Heart right ventricle (tissue), 16 donors: ENCODE measurements at regions of chr2 and their contacts with region 1.

Region 1: DNA sequence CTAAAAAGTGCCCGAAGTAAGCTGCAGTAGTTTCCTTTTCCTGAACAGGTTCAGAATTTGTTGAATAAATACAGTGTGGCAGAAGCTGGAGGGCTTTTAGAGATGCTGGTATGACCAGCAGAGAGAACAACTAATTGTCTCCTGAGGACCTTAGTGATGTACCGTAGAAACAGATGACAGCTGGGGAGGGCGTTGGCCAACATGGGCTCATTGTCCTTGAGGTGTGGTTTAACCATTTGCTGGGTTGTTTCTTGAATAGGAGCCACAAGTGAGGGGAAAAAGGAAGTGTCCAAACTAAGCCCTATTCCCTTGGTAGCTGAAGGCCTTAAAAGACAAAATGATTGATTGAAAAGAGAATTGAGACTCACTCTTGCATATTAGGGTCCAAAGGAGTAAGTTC is 11.7 kb upstream of the FAM228A start:
- DNase-seq: no peak
- ATAC-seq: no peak
- H3K4me3 ChIP-seq: no peak overlapping the region
- H3K27ac ChIP-seq: no peak overlapping the region
- H3K4me1 ChIP-seq: no peaks in the 10 kb centered on the region
- H3K27me3 ChIP-seq: no peaks in the 10 kb centered on the region
- CTCF ChIP-seq: no peak

Region 2: GRCh38 chr2:23824777-23825212 is 338.4 kb before region 1 on chr2:
- intact Hi-C with region 1: loop called in 1 of 10 experiments (anchors 2 kb)
- DNase-seq: peak in 1 of 2 donors; percentile 18
- ATAC-seq: peak in 4 of 8 donors; percentile 16 to 52 (median 28)
- H3K4me3 ChIP-seq: no peak overlapping the region
- H3K27ac ChIP-seq: no peak overlapping the region
- H3K4me1 ChIP-seq: peaks cover 0 to 7% (median 0%) of the 10 kb centered on the region in 9 donors
- H3K27me3 ChIP-seq: no peaks in the 10 kb centered on the region
- CTCF ChIP-seq: peak; percentile 25 to 81 (median 70)

Region 3: DNA sequence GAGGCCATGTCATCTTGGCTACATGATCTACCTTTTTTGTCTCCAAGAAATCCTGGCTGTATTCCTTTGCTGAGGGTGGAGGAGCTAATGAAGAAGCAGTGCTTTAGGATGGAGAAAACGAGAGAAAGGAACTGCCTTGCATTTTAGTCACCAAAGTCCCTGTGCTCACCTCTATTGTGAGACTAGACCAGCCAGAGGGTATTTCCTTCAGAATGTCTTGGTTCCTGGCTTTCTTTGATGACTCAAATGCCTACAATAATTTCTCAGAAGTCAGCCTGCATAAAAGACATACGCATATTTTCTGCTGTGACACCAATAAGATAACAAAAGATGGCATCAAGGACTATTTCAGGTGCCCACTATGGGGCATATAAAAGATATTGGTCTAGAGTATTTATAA is 97.8 kb before region 1 on chr2:
- intact Hi-C with region 1: no loop called
- DNase-seq: no peak
- ATAC-seq: no peak
- H3K4me3 ChIP-seq: no peak overlapping the region
- H3K27ac ChIP-seq: no peak overlapping the region
- H3K4me1 ChIP-seq: no peaks in the 10 kb centered on the region
- H3K27me3 ChIP-seq: no peaks in the 10 kb centered on the region
- CTCF ChIP-seq: no peak

Region 4: GRCh38 chr2:24456599-24457556 is 293.7 kb after region 1 on chr2:
- intact Hi-C with region 1: no loop called
- DNase-seq: peak; percentile 45 to 49
- ATAC-seq: peak; percentile 75 to 97 (median 90)
- H3K4me3 ChIP-seq: no peak overlapping the region
- H3K27ac ChIP-seq: no peak overlapping the region
- H3K4me1 ChIP-seq: peaks cover 0 to 29% (median 8%) of the 10 kb centered on the region in 9 donors
- H3K27me3 ChIP-seq: no peaks in the 10 kb centered on the region
- CTCF ChIP-seq: no peak